ENCODE measurements at regions of chr21 and their contacts with region 1.

Region 1: GRCh38 chr21:31873696-31874599 is 1.1 kb downstream of the HUNK start:
- DNase-seq: no peak
- ATAC-seq: peak in 1 of 2 donors; percentile 24
- H3K4me3 ChIP-seq: peak overlapping the region; percentile 50 to 73 (median 58)
- H3K27ac ChIP-seq: no peak overlapping the region
- H3K4me1 ChIP-seq: peaks cover 8 to 21% of the 10 kb centered on the region in 2 donors
- H3K27me3 ChIP-seq: peaks cover 35 to 42% (median 40%) of the 10 kb centered on the region in 3 donors
- CTCF ChIP-seq: peak in 3 of 5 experiments; percentile 43 to 52 (median 47)
- POLR2A ChIP-seq: no peak

Region 2: DNA sequence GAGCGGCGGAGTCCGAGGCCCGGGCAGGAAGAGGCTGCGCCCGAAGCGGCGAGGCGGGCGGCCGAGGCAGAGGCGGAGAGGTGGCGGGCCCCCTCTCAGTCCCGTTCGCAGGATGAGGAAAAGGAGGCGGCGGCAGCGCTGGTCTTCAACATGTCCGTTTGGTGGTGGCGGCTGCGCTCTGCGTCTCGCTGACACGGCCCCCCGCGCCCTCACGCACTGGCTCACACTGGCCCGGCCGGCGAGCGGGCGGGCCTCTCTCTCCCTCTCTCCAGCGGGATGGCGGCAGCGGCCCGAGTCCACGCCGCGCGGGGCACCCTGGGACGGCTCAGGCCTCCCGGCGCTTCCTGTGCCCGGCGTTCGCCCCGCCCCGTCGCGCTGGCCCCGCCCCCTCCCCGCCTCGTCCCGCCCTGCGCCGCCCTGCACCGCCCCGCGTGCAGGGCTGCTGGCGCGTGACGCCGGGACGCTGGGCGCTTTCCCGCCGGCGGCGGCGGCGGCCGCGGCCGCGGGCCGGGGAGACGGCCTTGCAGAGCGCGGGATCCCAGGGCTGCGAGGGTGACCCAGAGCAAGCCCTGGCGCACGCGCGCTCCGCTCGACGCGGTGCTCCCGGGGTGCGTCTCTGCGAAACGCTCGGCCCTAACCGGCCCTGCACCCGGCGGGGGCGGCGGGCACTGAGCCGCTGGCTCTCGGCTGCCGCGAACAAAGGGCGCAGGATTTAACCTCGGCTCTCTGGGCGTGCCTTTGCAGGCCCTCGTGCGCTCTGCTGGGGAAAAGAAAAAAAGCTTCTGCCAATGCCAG is 141.9 kb before region 1 on chr21 and contains the start of gene SCAF4:
- in situ Hi-C with region 1: no loop called
- intact Hi-C with region 1: loop called (anchors 5 kb)
- DNase-seq: peak; percentile 83 to 90
- ATAC-seq: peak; percentile 81 to 87
- H3K4me3 ChIP-seq: peak within 1 kb of the TSS; percentile 88 to 94 (median 91)
- H3K27ac ChIP-seq: peak within 1 kb of the TSS; percentile 92 to 99 (median 97)
- H3K4me1 ChIP-seq: peaks cover 39 to 44% of the 10 kb centered on the region in 2 donors
- H3K27me3 ChIP-seq: no peaks in the 10 kb centered on the region
- CTCF ChIP-seq: no peak
- POLR2A ChIP-seq: peak; percentile 90 to 95
- total RNA-seq, gene SCAF4: 8.2 to 11.5 (median 10.0) TPM

Region 3: GRCh38 chr21:32278518-32279376 is 404.8 kb after region 1 on chr21 and contains the start of gene MIS18A:
- in situ Hi-C with region 1: no loop called
- intact Hi-C with region 1: loop called (anchors 5 kb)
- DNase-seq: peak; percentile 86 to 93
- ATAC-seq: peak; percentile 95 to 98
- H3K4me3 ChIP-seq: peak within 1 kb of the TSS; percentile 82 to 98 (median 92)
- H3K27ac ChIP-seq: peak within 1 kb of the TSS; percentile 41 to 72 (median 60)
- H3K4me1 ChIP-seq: peaks cover 14 to 25% of the 10 kb centered on the region in 2 donors
- H3K27me3 ChIP-seq: no peaks in the 10 kb centered on the region
- CTCF ChIP-seq: peak in 2 of 5 experiments; percentile 9 to 12
- POLR2A ChIP-seq: peak; percentile 9 to 33
- total RNA-seq, gene MIS18A: 0.51 to 2.7 (median 0.87) TPM

Measured in gastrocnemius medialis (tissue), 4 donors.